ENCODE measurements at regions of chr9 and their contacts with region 1.

Region 1: GRCh38 chr9:15813076-15813475 is 260.2 kb downstream of the CCDC171 start:
- DNase-seq: no peak
- ATAC-seq: no peak
- H3K4me3 ChIP-seq: no peak overlapping the region
- H3K4me3 Mint-ChIP-seq: no peak overlapping the region
- H3K27ac ChIP-seq: no peak overlapping the region
- H3K27ac Mint-ChIP-seq: no peak overlapping the region
- H3K4me1 ChIP-seq: no peaks in the 10 kb centered on the region
- H3K4me1 Mint-ChIP-seq: no peaks in the 10 kb centered on the region
- H3K27me3 ChIP-seq: no peaks in the 10 kb centered on the region
- H3K27me3 Mint-ChIP-seq: peaks cover 0 to 5% (median 0%) of the 10 kb centered on the region in 5 donors

Region 2: DNA sequence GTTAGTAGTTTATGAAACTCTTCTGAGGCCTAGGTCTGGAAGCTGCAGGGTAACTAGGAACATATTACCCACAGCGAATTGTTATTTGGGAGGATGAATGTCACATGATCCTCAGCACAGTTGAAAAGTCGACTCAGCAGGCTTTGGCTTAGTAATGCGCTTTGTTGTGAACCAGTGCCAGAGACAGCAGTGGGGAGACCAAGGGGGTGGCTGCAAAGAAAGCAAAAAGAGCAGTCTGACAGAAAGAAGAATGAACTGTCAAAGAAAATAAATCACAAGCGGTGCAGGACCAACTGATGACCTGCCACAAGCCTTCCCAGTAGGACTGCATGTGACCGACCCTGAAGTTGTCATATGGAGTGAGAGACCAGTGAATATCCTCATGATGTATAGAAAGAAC is 90.2 kb before region 1 on chr9:
- CTCF ChIA-PET with region 1: no interaction called
- POLR2A ChIA-PET with region 1: no interaction called
- intact Hi-C with region 1: no loop called
- DNase-seq: no peak
- ATAC-seq: no peak
- H3K4me3 ChIP-seq: no peak overlapping the region
- H3K4me3 Mint-ChIP-seq: no peak overlapping the region
- H3K27ac ChIP-seq: no peak overlapping the region
- H3K27ac Mint-ChIP-seq: no peak overlapping the region
- H3K4me1 ChIP-seq: no peaks in the 10 kb centered on the region
- H3K4me1 Mint-ChIP-seq: no peaks in the 10 kb centered on the region
- H3K27me3 ChIP-seq: no peaks in the 10 kb centered on the region
- H3K27me3 Mint-ChIP-seq: no peaks in the 10 kb centered on the region

Region 3: GRCh38 chr9:15755660-15756059 is 57.4 kb before region 1 on chr9:
- CTCF ChIA-PET with region 1: no interaction called
- POLR2A ChIA-PET with region 1: no interaction called
- intact Hi-C with region 1: loop called in 1 of 2 experiments (anchors 5 kb)
- DNase-seq: no peak
- ATAC-seq: no peak
- H3K4me3 ChIP-seq: no peak overlapping the region
- H3K4me3 Mint-ChIP-seq: no peak overlapping the region
- H3K27ac ChIP-seq: no peak overlapping the region
- H3K27ac Mint-ChIP-seq: no peak overlapping the region
- H3K4me1 ChIP-seq: no peaks in the 10 kb centered on the region
- H3K4me1 Mint-ChIP-seq: no peaks in the 10 kb centered on the region
- H3K27me3 ChIP-seq: no peaks in the 10 kb centered on the region
- H3K27me3 Mint-ChIP-seq: no peaks in the 10 kb centered on the region

Region 4: GRCh38 chr9:15824310-15824709 is 11.2 kb after region 1 on chr9:
- CTCF ChIA-PET with region 1: no interaction called
- POLR2A ChIA-PET with region 1: no interaction called
- intact Hi-C with region 1: loop called in 1 of 2 experiments (anchors 1 kb)
- DNase-seq: no peak
- ATAC-seq: no peak
- H3K4me3 ChIP-seq: no peak overlapping the region
- H3K4me3 Mint-ChIP-seq: no peak overlapping the region
- H3K27ac ChIP-seq: no peak overlapping the region
- H3K27ac Mint-ChIP-seq: no peak overlapping the region
- H3K4me1 ChIP-seq: no peaks in the 10 kb centered on the region
- H3K4me1 Mint-ChIP-seq: no peaks in the 10 kb centered on the region
- H3K27me3 ChIP-seq: no peaks in the 10 kb centered on the region
- H3K27me3 Mint-ChIP-seq: peaks cover 0 to 4% (median 0%) of the 10 kb centered on the region in 5 donors